Activated B cell treated with CpG ODN at 0.5 μM for 24 hours (primary cell): ENCODE measurements at regions of chr2 and their contacts with region 1.

Region 1: DNA sequence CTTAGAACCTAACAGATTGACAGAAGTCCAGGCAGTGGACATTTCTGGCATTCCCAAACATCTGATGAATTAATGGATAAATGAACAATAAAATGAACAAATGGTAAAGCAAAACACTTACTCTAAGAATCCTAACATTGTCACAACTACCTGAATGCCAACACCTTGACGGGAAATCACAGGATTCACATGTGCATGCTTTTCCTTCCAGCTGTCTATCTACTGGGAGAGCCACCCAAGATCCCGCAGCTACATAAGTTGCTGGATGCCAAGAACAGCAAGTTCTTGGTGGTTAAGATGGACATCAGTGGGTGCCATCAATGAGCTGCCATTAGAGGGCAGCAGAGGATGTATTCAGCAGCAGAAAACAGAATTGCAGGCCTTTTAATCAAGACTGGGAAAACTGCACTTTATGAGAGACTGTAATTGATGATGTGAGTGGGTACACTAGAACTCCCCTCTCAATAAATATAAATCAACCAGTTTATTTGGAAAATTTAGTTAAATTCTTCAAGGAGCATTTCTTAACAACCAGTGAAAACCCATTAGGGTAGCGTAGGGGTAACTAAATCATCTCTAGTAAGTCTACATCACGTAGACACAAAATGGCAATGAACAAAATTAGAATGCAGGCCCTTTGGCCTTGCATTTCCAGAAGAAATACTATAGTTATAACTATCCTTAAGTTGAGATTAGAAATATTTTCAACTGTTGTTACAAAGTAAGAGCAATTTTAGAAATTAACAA is 45.6 kb downstream of the SESTD1 start:
- DNase-seq: no peak
- ATAC-seq: peak; percentile 71
- H3K4me3 Mint-ChIP-seq: no peak overlapping the region
- H3K27ac Mint-ChIP-seq: peak overlapping the region; percentile 41
- H3K4me1 Mint-ChIP-seq: peaks cover 56% of the 10 kb centered on the region
- H3K27me3 Mint-ChIP-seq: no peaks in the 10 kb centered on the region
- CTCF ChIP-seq: peak; percentile 76

Region 2: GRCh38 chr2:178796079-178796677 is 422.8 kb before region 1 on chr2:
- CTCF ChIA-PET with region 1: interaction called, 3 read pairs
- POLR2A ChIA-PET with region 1: no interaction called
- intact Hi-C with region 1: loop called (anchors 2 kb)
- DNase-seq: no peak
- ATAC-seq: no peak
- H3K4me3 Mint-ChIP-seq: no peak overlapping the region
- H3K27ac Mint-ChIP-seq: no peak overlapping the region
- H3K4me1 Mint-ChIP-seq: no peaks in the 10 kb centered on the region
- H3K27me3 Mint-ChIP-seq: no peaks in the 10 kb centered on the region
- CTCF ChIP-seq: no peak

Region 3: DNA sequence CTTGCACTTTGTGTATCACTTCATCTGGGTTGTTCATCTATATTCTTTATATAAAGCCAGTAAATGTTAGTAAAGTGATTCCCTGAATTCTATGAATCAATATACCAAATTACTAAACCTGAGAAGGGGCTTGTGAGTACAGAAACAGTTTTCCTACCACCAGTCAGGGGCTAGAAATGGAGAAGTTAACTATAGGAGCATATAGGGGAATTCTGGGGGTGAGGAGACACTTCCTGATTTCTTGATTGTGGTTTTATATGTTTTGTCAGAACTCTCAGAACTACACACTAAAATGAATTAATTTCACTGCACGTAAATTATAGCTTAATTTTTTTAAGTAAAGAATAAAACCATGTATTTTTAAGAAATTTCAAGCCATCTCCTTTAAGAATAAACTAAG is 48.1 kb before region 1 on chr2:
- CTCF ChIA-PET with region 1: no interaction called
- POLR2A ChIA-PET with region 1: no interaction called
- intact Hi-C with region 1: no loop called
- DNase-seq: no peak
- ATAC-seq: peak; percentile 73
- H3K4me3 Mint-ChIP-seq: peak overlapping the region; percentile 24
- H3K27ac Mint-ChIP-seq: peak overlapping the region; percentile 76
- H3K4me1 Mint-ChIP-seq: peaks cover 33% of the 10 kb centered on the region
- H3K27me3 Mint-ChIP-seq: no peaks in the 10 kb centered on the region
- CTCF ChIP-seq: no peak

Region 4: GRCh38 chr2:179239195-179239594 is 20.2 kb after region 1 on chr2:
- CTCF ChIA-PET with region 1: interaction called, 3 read pairs
- POLR2A ChIA-PET with region 1: no interaction called
- intact Hi-C with region 1: loop called (anchors 2 kb)
- DNase-seq: no peak
- ATAC-seq: peak; percentile 61
- H3K4me3 Mint-ChIP-seq: peak overlapping the region; percentile 0
- H3K27ac Mint-ChIP-seq: peak overlapping the region; percentile 19
- H3K4me1 Mint-ChIP-seq: peaks cover 79% of the 10 kb centered on the region
- H3K27me3 Mint-ChIP-seq: no peaks in the 10 kb centered on the region
- CTCF ChIP-seq: no peak

Region 5: DNA sequence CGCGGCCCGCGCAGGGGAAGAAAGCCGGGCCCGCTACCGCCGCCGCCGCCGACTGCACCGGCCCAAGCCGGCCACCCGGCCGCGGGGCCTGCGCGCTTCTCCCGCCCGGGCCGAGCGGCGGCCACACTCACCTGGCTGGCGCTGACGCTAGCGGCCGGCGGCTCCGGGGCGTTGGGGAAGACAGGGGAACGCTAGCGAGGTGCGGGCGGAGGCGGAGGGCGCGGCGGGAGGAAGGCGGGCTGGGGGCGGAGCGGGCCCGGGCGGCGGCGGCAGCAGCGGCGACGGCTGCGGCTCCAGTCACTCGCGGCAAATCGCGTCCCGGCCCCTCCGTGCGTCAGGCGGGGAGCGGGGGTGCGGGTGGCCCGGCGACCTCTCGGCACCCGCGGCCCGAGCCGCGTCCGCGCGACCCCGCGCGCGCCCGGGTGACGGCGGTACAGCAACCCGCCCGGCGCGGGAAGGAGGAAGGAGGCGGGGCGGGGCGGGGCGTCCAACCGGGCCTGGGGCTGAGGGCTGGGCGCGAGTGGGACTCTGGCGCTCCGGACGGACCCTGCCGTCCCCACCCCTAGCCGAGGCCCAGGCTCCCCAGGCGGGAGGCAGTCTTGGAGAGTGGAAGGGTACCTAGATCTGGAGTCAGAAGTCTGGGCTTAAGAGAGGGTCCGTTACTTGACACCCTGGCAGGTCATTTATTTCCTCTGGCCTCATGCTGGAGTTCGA is 45.5 kb after region 1 on chr2 and contains the start of gene SESTD1:
- CTCF ChIA-PET with region 1: no interaction called
- POLR2A ChIA-PET with region 1: no interaction called
- intact Hi-C with region 1: loop called (anchors 1 kb)
- DNase-seq: peak; percentile 75
- ATAC-seq: peak; percentile 80
- H3K4me3 Mint-ChIP-seq: peak within 1 kb of the TSS; percentile 91
- H3K27ac Mint-ChIP-seq: peak within 1 kb of the TSS; percentile 86
- H3K4me1 Mint-ChIP-seq: peaks cover 53% of the 10 kb centered on the region
- H3K27me3 Mint-ChIP-seq: no peaks in the 10 kb centered on the region
- CTCF ChIP-seq: no peak
- total RNA-seq, gene SESTD1: 49.2 and 49.6 TPM in 2 replicates

Region 6: DNA sequence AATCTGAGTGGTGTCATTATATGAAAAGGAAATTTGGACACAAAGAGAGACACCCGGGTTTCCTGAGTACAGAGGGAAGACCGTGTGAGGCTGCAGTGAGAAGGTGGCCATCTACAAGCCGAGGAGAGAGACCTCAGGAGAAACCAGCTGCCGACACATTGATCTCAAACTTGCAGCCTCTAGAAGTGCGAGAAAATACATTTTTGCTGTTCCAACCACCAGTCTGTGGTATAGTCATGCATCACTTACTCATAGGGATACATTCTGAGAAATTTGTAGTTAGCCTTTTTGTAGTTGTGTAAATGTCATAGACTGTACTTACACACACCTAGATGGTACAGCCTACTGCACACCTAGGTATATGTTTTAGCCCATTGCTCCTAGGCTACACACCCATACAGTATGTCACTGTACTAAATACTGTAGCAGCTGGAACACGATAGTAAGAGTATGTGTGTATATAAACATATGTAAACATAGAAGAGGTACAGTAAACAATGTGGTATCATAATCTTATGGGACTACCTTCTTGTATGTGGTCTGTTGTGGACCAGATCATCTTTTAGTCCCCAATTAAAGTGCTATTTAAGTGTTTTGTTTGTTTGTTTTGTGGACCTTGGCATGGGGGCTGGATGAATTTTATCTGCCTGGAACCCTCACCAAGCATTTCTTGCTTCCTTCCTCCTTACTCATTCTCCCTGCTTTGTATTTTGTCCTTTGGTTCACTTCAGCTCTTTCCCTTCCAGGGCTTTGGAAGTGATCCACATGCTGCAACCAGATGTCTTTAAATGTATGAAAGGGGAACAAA is 83.9 kb after region 1 on chr2:
- CTCF ChIA-PET with region 1: no interaction called
- POLR2A ChIA-PET with region 1: no interaction called
- intact Hi-C with region 1: no loop called
- DNase-seq: no peak
- ATAC-seq: no peak
- H3K4me3 Mint-ChIP-seq: no peak overlapping the region
- H3K27ac Mint-ChIP-seq: no peak overlapping the region
- H3K4me1 Mint-ChIP-seq: no peaks in the 10 kb centered on the region
- H3K27me3 Mint-ChIP-seq: no peaks in the 10 kb centered on the region
- CTCF ChIP-seq: no peak

Region 7: GRCh38 chr2:179340668-179341067 is 121.6 kb after region 1 on chr2:
- CTCF ChIA-PET with region 1: interaction called, 20 read pairs
- POLR2A ChIA-PET with region 1: no interaction called
- intact Hi-C with region 1: loop called (anchors 1 kb)
- DNase-seq: no peak
- ATAC-seq: no peak
- H3K4me3 Mint-ChIP-seq: no peak overlapping the region
- H3K27ac Mint-ChIP-seq: no peak overlapping the region
- H3K4me1 Mint-ChIP-seq: peaks cover 8% of the 10 kb centered on the region
- H3K27me3 Mint-ChIP-seq: no peaks in the 10 kb centered on the region
- CTCF ChIP-seq: no peak

Region 8: DNA sequence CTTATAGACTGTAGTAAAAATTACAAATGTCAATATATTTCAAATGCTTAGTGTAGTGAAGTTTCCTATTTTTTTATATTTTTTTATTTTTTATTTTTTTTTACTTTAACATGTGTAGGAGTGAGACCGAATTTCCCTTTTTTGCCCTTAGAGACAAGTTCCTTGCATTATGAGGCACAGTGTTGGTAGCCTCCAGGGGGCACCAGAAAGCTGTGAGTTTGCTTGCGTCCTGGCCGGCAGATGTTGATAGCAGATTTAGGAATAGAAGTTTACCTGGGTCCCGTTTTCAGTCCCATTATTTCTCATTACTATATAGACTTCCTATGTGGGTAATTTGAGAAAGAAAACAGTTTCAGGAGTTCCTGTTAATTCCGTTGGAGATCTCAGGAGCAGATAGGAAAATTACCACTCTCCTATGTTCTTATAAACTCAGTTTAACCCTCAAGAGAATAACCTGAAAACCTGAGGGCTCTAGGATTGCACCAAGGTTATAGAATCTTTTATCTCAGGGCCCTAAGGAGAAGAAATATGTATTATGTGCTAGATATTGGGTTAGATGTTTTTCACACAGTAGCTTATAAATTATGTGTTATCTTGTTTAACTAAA is 203.1 kb after region 1 on chr2:
- CTCF ChIA-PET with region 1: interaction called, 4 read pairs
- POLR2A ChIA-PET with region 1: no interaction called
- intact Hi-C with region 1: loop called (anchors 1 kb)
- DNase-seq: peak; percentile 19
- ATAC-seq: peak; percentile 66
- H3K4me3 Mint-ChIP-seq: no peak overlapping the region
- H3K27ac Mint-ChIP-seq: no peak overlapping the region
- H3K4me1 Mint-ChIP-seq: no peaks in the 10 kb centered on the region
- H3K27me3 Mint-ChIP-seq: peaks cover 9% of the 10 kb centered on the region
- CTCF ChIP-seq: peak; percentile 40

Region 9: GRCh38 chr2:179440642-179441251 is 221.7 kb after region 1 on chr2:
- CTCF ChIA-PET with region 1: interaction called, 33 read pairs
- POLR2A ChIA-PET with region 1: no interaction called
- intact Hi-C with region 1: loop called (anchors 1 kb)
- DNase-seq: no peak
- ATAC-seq: peak; percentile 45
- H3K4me3 Mint-ChIP-seq: no peak overlapping the region
- H3K27ac Mint-ChIP-seq: no peak overlapping the region
- H3K4me1 Mint-ChIP-seq: no peaks in the 10 kb centered on the region
- H3K27me3 Mint-ChIP-seq: peaks cover 35% of the 10 kb centered on the region
- CTCF ChIP-seq: peak; percentile 81